ENCODE measurements at regions of chr13 and their contacts with region 1.

Region 1: GRCh38 chr13:44312898-44313551 is 60.6 kb upstream of the SERP2 start:
- DNase-seq: peak; percentile 94
- H3K4me3 Mint-ChIP-seq: peak overlapping the region; percentile 22
- H3K27ac Mint-ChIP-seq: peak overlapping the region; percentile 93
- H3K4me1 Mint-ChIP-seq: peaks cover 67% of the 10 kb centered on the region
- H3K27me3 Mint-ChIP-seq: no peaks in the 10 kb centered on the region
- CTCF ChIP-seq: no peak

Region 2: GRCh38 chr13:44050450-44051063 is 262.5 kb before region 1 on chr13:
- CTCF ChIA-PET with region 1: no interaction called
- POLR2A ChIA-PET with region 1: interaction called, 3 read pairs
- intact Hi-C with region 1: loop called (anchors 2 kb)
- DNase-seq: peak; percentile 54
- H3K4me3 Mint-ChIP-seq: no peak overlapping the region
- H3K27ac Mint-ChIP-seq: no peak overlapping the region
- H3K4me1 Mint-ChIP-seq: peaks cover 5% of the 10 kb centered on the region
- H3K27me3 Mint-ChIP-seq: peaks cover 26% of the 10 kb centered on the region
- CTCF ChIP-seq: peak; percentile 62

Region 3: GRCh38 chr13:44160591-44161191 is 152.3 kb before region 1 on chr13:
- CTCF ChIA-PET with region 1: no interaction called
- POLR2A ChIA-PET with region 1: interaction called, 25 read pairs
- intact Hi-C with region 1: loop called (anchors 1 kb)
- DNase-seq: no peak
- H3K4me3 Mint-ChIP-seq: no peak overlapping the region
- H3K27ac Mint-ChIP-seq: peak overlapping the region; percentile 98
- H3K4me1 Mint-ChIP-seq: peaks cover 21% of the 10 kb centered on the region
- H3K27me3 Mint-ChIP-seq: no peaks in the 10 kb centered on the region
- CTCF ChIP-seq: no peak

Region 4: GRCh38 chr13:44243198-44243857 is 69.7 kb before region 1 on chr13:
- CTCF ChIA-PET with region 1: interaction called, 9 read pairs
- POLR2A ChIA-PET with region 1: interaction called, 22 read pairs
- intact Hi-C with region 1: loop called (anchors 1 kb)
- DNase-seq: peak; percentile 97
- H3K4me3 Mint-ChIP-seq: no peak overlapping the region
- H3K27ac Mint-ChIP-seq: peak overlapping the region; percentile 81
- H3K4me1 Mint-ChIP-seq: peaks cover 29% of the 10 kb centered on the region
- H3K27me3 Mint-ChIP-seq: no peaks in the 10 kb centered on the region
- CTCF ChIP-seq: peak; percentile 71

Region 5: GRCh38 chr13:44300895-44301638 is 12.0 kb before region 1 on chr13:
- CTCF ChIA-PET with region 1: no interaction called
- POLR2A ChIA-PET with region 1: interaction called, 87 read pairs
- intact Hi-C with region 1: loop called (anchors 1 kb)
- DNase-seq: peak; percentile 98
- H3K4me3 Mint-ChIP-seq: peak overlapping the region; percentile 52
- H3K27ac Mint-ChIP-seq: peak overlapping the region; percentile 88
- H3K4me1 Mint-ChIP-seq: peaks cover 56% of the 10 kb centered on the region
- H3K27me3 Mint-ChIP-seq: no peaks in the 10 kb centered on the region
- CTCF ChIP-seq: peak; percentile 8

Measured in MCF 10A (cell line).